ENCODE measurements at regions of chr18 and their contacts with region 1.

Region 1: GRCh38 chr18:23586249-23587196 is at the start of gene NPC1:
- DNase-seq: peak; percentile 92
- H3K4me3 Mint-ChIP-seq: peak within 1 kb of the TSS; percentile 94
- H3K27ac Mint-ChIP-seq: peak within 1 kb of the TSS; percentile 93
- H3K4me1 Mint-ChIP-seq: peaks cover 42% of the 10 kb centered on the region
- H3K27me3 Mint-ChIP-seq: peaks cover 3% of the 10 kb centered on the region
- total RNA-seq, gene NPC1: 30.1 and 30.2 TPM in 2 replicates

Region 2: GRCh38 chr18:23131693-23132319 is 454.7 kb before region 1 on chr18:
- intact Hi-C with region 1: loop called (anchors 10 kb)
- DNase-seq: peak; percentile 35
- H3K4me3 Mint-ChIP-seq: no peak overlapping the region
- H3K27ac Mint-ChIP-seq: no peak overlapping the region
- H3K4me1 Mint-ChIP-seq: peaks cover 20% of the 10 kb centered on the region
- H3K27me3 Mint-ChIP-seq: peaks cover 22% of the 10 kb centered on the region

Region 3: GRCh38 chr18:23452728-23453679 is 133.5 kb before region 1 on chr18 and contains the start of gene RIOK3:
- intact Hi-C with region 1: loop called (anchors 1 kb)
- DNase-seq: peak; percentile 94
- H3K4me3 Mint-ChIP-seq: peak within 1 kb of the TSS; percentile 97
- H3K27ac Mint-ChIP-seq: peak within 1 kb of the TSS; percentile 92
- H3K4me1 Mint-ChIP-seq: peaks cover 39% of the 10 kb centered on the region
- H3K27me3 Mint-ChIP-seq: no peaks in the 10 kb centered on the region
- total RNA-seq, gene RIOK3: 40.8 and 52.2 TPM in 2 replicates

Region 4: DNA sequence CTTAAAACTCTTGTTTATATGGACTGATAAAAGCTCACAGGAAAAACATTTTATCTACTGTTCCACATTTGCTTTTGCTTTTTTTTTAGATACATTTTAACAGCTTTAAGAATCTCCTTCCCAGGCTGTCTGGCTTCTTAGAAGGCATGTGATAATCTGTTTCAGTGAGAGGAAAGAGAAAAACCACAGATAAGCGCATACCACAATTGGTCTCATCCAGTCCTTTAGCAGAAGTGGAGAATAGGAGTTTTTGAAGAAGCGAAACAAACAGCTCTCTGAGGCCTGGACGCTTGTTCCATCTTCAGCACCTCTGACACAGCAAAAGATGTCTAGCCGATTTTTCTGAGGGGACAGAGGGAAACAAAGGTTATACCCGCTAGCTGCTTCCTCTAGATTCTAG is 45.7 kb before region 1 on chr18:
- intact Hi-C with region 1: loop called (anchors 1 kb)
- DNase-seq: peak; percentile 26
- H3K4me3 Mint-ChIP-seq: peak overlapping the region; percentile 43
- H3K27ac Mint-ChIP-seq: peak overlapping the region; percentile 71
- H3K4me1 Mint-ChIP-seq: peaks cover 39% of the 10 kb centered on the region
- H3K27me3 Mint-ChIP-seq: no peaks in the 10 kb centered on the region

Region 5: DNA sequence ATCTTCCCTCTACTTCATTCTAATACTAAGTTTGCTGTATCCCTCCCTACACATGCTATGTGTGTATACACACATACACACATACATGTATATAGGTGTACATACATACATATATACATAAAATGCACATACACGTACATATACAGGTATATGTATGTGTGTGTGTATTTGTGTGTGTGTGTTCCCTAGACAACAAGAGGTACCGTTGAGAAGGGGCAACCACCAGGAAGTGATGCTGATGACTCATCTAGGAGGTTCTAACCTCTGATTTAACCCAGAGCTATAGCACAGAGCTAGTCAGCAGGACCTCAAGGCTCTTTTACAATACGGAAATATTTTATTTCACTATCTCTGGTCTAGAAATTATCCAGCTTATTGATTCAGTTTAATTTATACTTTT is 241.9 kb after region 1 on chr18:
- intact Hi-C with region 1: loop called (anchors 1 kb)
- DNase-seq: peak; percentile 49
- H3K4me3 Mint-ChIP-seq: no peak overlapping the region
- H3K27ac Mint-ChIP-seq: peak overlapping the region; percentile 89
- H3K4me1 Mint-ChIP-seq: peaks cover 52% of the 10 kb centered on the region
- H3K27me3 Mint-ChIP-seq: peaks cover 4% of the 10 kb centered on the region

Region 6: DNA sequence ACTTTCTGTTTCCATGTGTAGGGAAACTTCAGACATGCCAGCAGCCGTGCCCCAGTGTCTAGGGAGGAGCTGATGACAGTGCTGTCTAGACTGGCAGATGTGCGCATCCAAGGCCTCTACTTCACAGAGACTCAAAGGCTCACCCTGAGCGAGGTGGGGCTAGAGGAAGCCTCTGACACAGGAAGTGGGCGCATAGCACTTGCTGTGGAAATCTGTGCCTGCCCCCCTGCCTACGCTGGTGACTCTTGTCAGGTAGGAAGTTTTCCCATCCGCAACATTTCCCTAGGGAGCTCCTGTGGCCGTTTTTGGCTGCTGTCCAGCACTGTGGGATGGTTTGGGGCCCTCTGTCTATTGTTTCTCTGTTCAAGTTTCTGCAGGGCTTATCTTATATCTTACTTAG is 284.9 kb after region 1 on chr18:
- intact Hi-C with region 1: no loop called
- DNase-seq: peak; percentile 13
- H3K4me3 Mint-ChIP-seq: peak overlapping the region; percentile 5
- H3K27ac Mint-ChIP-seq: no peak overlapping the region
- H3K4me1 Mint-ChIP-seq: peaks cover 28% of the 10 kb centered on the region
- H3K27me3 Mint-ChIP-seq: peaks cover 16% of the 10 kb centered on the region

Measured in activated T-helper 1 cell treated with anti-CD3 and anti-CD28 coated beads, Interleukin-12 subunit alpha, Interleukin-12 subunit beta, Interleukin-2, Interleukin-4 antibody, amounts not matched to agents 30 ng/mL and 10 ng/mL and 1 ng/mL, durations not matched to agents 14 hours and 24 hours and 36 hours (primary cell).